ENCODE measurements at regions of chr9 and their contacts with region 1.

Region 1: DNA sequence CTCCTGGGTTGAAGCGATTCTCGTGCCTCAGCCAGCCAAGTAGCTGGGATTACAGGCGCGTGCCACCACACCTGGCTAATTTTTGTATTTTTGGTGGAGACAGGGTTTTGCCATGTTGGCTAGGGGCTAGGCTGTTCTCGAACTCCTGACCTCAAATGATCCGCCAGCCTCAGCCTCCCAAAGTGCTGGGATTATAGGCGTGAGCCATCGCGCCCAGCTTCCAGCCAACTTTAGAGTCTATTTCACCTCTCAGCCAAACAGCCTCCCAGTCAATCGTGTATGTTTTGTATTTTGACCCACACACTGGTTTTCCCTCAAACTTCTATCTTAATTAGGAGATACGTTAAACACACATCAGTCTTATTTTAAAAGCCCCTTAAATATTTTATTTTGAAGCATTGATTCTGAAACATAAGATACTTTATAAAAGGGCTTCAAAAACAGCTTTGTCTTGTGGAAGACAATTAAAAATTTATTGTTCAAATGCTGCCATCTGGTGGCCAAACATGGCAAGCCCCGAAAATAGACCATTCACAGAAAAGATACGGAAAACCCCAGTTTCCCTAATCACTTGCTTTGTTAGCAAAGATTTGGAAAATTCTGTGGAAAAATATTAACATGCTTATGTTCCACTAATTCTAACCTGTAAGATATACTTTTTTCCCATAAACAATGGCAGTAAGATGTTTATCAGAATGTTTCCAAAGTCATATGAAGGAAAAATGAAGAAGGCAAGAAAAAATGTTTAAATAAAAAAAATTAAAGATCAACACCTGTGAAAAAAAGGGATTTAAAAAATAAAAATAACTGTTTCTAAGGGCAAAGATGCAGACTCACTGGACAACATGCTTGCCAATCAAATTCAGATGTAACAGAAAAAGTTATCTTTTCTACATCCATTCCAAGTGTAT is 33.1 kb downstream of the APTX start:
- DNase-seq: peak; percentile 57
- H3K4me3 ChIP-seq: no peak overlapping the region
- H3K27ac ChIP-seq: no peak overlapping the region
- H3K4me1 ChIP-seq: peaks cover 11% of the 10 kb centered on the region
- H3K27me3 ChIP-seq: no peaks in the 10 kb centered on the region
- CTCF ChIP-seq: peak; percentile 83

Region 2: DNA sequence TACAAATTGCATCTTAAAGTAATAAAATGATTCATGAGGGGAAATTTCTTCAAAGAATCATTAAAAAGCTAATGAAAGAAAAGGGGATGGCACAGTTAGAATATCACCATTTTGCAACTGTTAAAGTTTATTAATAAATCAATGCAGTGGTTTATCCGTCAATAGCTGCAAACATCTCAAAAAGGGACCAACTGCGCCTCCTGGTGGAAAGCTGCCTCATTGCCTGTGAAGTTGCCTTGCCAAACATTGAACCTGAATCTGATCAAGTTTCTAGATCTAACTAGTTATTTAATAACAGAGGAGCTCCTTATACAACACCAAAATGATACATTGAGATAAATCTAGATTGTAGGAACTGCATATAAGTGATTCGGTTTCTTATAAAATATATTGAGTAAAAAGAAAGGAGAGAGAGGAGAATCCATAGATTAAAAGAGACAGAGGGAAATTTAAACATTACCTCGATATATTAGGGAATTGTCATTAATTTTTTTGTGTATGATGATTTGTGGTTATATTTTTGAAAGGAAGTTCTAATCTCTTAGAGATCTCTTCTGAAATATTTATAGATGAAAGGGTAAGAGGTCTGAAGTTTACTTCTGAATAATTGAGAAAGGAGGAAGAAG is 388.5 kb before region 1 on chr9:
- CTCF ChIA-PET with region 1: interaction called, 36 read pairs
- POLR2A ChIA-PET with region 1: no interaction called
- intact Hi-C with region 1: loop called (anchors 1 kb)
- DNase-seq: peak; percentile 61
- H3K4me3 ChIP-seq: no peak overlapping the region
- H3K27ac ChIP-seq: no peak overlapping the region
- H3K4me1 ChIP-seq: no peaks in the 10 kb centered on the region
- H3K27me3 ChIP-seq: no peaks in the 10 kb centered on the region
- CTCF ChIP-seq: peak; percentile 92

Region 3: GRCh38 chr9:32764140-32764539 is 204.2 kb before region 1 on chr9:
- CTCF ChIA-PET with region 1: no interaction called
- POLR2A ChIA-PET with region 1: no interaction called
- intact Hi-C with region 1: loop called (anchors 5 kb)
- DNase-seq: no peak
- H3K4me3 ChIP-seq: no peak overlapping the region
- H3K27ac ChIP-seq: no peak overlapping the region
- H3K4me1 ChIP-seq: no peaks in the 10 kb centered on the region
- H3K27me3 ChIP-seq: peaks cover 27% of the 10 kb centered on the region
- CTCF ChIP-seq: no peak

Region 4: DNA sequence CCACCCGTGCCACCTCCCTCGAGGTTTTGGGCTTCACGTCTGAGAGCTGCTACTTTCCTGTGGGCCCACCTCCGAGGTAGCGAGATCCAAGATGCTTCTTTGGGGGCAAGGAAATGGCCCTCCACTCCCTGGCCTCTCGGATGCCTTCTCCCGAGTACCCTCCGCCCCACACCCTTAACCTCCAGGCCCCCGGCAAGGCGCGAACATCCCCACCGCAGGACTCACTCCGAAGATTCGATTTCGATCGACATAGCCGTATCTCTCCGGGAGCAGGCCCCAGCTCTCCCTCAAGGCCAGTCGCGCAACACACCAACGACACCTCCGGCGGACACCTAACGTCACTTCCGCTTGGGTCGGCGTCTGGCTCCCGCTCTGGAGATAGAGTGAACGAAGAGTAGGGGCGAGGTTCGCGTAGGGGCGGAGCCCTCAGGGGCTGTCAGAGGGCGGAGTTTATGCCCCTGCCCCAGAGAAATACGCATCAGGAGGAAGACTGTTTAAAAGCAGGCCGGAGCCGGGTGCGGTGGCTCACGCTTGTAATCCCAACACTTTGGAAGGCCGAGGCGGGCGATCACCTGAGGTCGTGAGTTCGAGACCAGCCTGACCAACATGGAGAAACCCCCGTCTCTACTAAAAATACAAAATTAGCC is 108.1 kb after region 1 on chr9 and contains the start of gene SMU1:
- CTCF ChIA-PET with region 1: no interaction called
- POLR2A ChIA-PET with region 1: no interaction called
- intact Hi-C with region 1: no loop called
- DNase-seq: peak; percentile 99
- H3K4me3 ChIP-seq: peak within 1 kb of the TSS; percentile 63
- H3K27ac ChIP-seq: peak within 1 kb of the TSS; percentile 90
- H3K4me1 ChIP-seq: peaks cover 4% of the 10 kb centered on the region
- H3K27me3 ChIP-seq: no peaks in the 10 kb centered on the region
- CTCF ChIP-seq: no peak
- total RNA-seq, gene SMU1: 30.6 and 31.2 TPM in 2 replicates

Measured in A673 (cell line).